GM13977 (cell line): ENCODE measurements at regions of chr16 and their contacts with region 1.

Region 1: DNA sequence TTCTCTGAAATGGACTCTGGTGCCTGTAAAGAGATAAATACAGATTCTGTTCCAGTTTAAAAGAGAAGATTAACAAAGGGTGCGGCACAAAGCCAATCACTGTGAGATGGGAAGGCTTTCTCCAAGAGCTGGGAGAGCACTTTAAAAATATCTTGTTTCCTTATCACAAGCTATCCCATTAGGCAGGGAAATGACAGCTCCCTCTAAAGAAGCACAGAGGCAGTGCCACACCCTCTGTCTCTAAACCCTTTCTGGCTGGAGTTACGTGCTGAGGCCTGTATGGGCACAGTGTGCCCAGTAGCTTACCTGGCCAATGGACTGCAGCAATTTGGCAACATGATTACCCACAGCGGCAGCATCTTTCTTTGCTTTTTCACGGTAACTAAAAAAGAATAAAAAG is 9.0 kb upstream of the TERB1 start:
- DNase-seq: no peak
- CTCF ChIP-seq: no peak

Region 2: GRCh38 chr16:66751303-66751991 is 58.9 kb before region 1 on chr16 and contains the start of gene DYNC1LI2:
- in situ Hi-C with region 1: loop called (anchors 10 kb)
- DNase-seq: peak; percentile 96
- CTCF ChIP-seq: peak; percentile 98